CD8-positive, alpha-beta T cell (primary cell): ENCODE measurements at regions of chr21 and their contacts with region 1.

Region 1: GRCh38 chr21:15820852-15821379 is 91.1 kb downstream of the USP25 start:
- DNase-seq: no peak
- ATAC-seq: no peak
- H3K4me3 ChIP-seq: no peak overlapping the region
- H3K4me3 Mint-ChIP-seq: no peak overlapping the region
- H3K27ac ChIP-seq: no peak overlapping the region
- H3K27ac Mint-ChIP-seq: no peak overlapping the region
- H3K4me1 ChIP-seq: peaks cover 26% of the 10 kb centered on the region
- H3K4me1 Mint-ChIP-seq: peaks cover 46% of the 10 kb centered on the region
- H3K27me3 ChIP-seq: no peaks in the 10 kb centered on the region
- H3K27me3 Mint-ChIP-seq: no peaks in the 10 kb centered on the region
- CTCF ChIP-seq: no peak

Region 2: GRCh38 chr21:15688809-15689208 is 132.1 kb before region 1 on chr21:
- CTCF ChIA-PET with region 1: no interaction called
- POLR2A ChIA-PET with region 1: no interaction called
- intact Hi-C with region 1: loop called in 1 of 2 experiments (anchors 5 kb)
- DNase-seq: peak in 2 of 9 experiments; percentile 32 to 54
- ATAC-seq: peak; percentile 23
- H3K4me3 ChIP-seq: no peak overlapping the region
- H3K4me3 Mint-ChIP-seq: no peak overlapping the region
- H3K27ac ChIP-seq: no peak overlapping the region
- H3K27ac Mint-ChIP-seq: no peak overlapping the region
- H3K4me1 ChIP-seq: no peaks in the 10 kb centered on the region
- H3K4me1 Mint-ChIP-seq: peaks cover 10% of the 10 kb centered on the region
- H3K27me3 ChIP-seq: no peaks in the 10 kb centered on the region
- H3K27me3 Mint-ChIP-seq: no peaks in the 10 kb centered on the region
- CTCF ChIP-seq: no peak

Region 3: DNA sequence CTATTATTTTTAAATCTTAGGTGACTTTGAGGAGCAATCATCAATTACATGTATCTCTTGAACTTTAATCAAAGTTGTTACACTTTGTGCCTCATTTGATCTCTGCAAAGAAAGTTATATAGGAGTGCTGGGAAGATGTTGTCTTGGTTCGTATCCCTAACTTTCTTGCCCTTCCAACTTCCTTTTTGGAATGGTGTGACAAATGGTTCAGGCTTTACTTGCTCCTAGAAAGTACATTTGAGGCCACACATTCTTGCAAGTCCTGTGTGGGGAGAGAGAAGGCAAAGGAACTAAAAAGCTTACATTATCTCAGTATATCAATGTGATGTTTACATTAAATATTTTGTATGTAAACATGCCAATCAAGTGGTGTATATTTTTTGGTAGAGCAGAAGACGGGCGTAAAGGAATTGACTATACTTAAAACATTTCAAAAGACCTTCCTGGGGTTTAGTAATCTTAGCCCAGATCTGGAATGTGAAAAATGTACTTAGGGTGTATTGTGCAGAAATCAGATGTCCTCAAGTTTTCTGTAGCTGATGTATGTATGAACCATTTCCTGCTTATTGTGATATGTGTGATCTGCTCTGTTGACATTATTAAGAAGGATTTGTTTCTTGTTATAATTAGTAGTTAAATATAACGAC is 31.9 kb before region 1 on chr21:
- CTCF ChIA-PET with region 1: no interaction called
- POLR2A ChIA-PET with region 1: no interaction called
- intact Hi-C with region 1: loop called in 1 of 2 experiments (anchors 5 kb)
- DNase-seq: no peak
- ATAC-seq: no peak
- H3K4me3 ChIP-seq: no peak overlapping the region
- H3K4me3 Mint-ChIP-seq: no peak overlapping the region
- H3K27ac ChIP-seq: no peak overlapping the region
- H3K27ac Mint-ChIP-seq: peak overlapping the region; percentile 24
- H3K4me1 ChIP-seq: no peaks in the 10 kb centered on the region
- H3K4me1 Mint-ChIP-seq: peaks cover 47% of the 10 kb centered on the region
- H3K27me3 ChIP-seq: no peaks in the 10 kb centered on the region
- H3K27me3 Mint-ChIP-seq: no peaks in the 10 kb centered on the region
- CTCF ChIP-seq: no peak